ENCODE measurements at regions of chr10 and their contacts with region 1.

Region 1: GRCh38 chr10:19909025-19909696 is 92.9 kb downstream of the PLXDC2 start:
- DNase-seq: no peak
- H3K4me3 ChIP-seq: no peak overlapping the region
- H3K27me3 ChIP-seq: no peaks in the 10 kb centered on the region
- CTCF ChIP-seq: no peak

Region 2: GRCh38 chr10:19144206-19144605 is 765.0 kb before region 1 on chr10:
- CTCF ChIA-PET with region 1: no interaction called
- POLR2A ChIA-PET with region 1: no interaction called
- DNase-seq: no peak
- H3K4me3 ChIP-seq: no peak overlapping the region
- H3K27me3 ChIP-seq: no peaks in the 10 kb centered on the region
- CTCF ChIP-seq: no peak

Region 3: GRCh38 chr10:19930936-19931893 is 22.1 kb after region 1 on chr10:
- CTCF ChIA-PET with region 1: no interaction called
- POLR2A ChIA-PET with region 1: no interaction called
- DNase-seq: no peak
- H3K4me3 ChIP-seq: no peak overlapping the region
- H3K27me3 ChIP-seq: no peaks in the 10 kb centered on the region
- CTCF ChIP-seq: no peak

Region 4: DNA sequence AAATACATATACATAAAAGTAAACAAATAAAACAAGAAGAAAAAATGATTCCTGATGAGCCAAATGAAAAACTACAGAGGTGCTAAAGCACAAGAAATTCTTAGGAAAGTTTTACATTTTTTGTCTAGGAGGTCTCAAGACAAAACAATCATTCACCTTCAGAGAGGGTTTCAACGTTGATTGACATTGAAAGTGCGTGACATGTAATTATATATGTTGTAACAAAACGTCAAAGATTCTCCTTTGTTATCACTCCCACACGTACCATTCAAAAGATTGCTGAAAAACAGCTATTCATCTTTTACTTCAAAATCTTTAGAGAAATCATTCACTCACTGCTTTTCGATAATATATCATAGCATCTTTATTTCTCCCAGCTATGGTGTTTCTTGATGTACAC is 612.0 kb after region 1 on chr10:
- CTCF ChIA-PET with region 1: no interaction called
- POLR2A ChIA-PET with region 1: interaction called, 16 read pairs
- DNase-seq: no peak
- H3K4me3 ChIP-seq: no peak overlapping the region
- H3K27me3 ChIP-seq: no peaks in the 10 kb centered on the region
- CTCF ChIP-seq: no peak